Panc1 (cell line): ENCODE measurements at regions of chr3 and their contacts with region 1.

Region 1: GRCh38 chr3:132343018-132343612 is 25.9 kb downstream of the ACP3 start:
- DNase-seq: peak; percentile 43
- ATAC-seq: peak; percentile 79; the same call in 1 of the 2 replicates
- H3K4me3 ChIP-seq: no peak overlapping the region
- H3K27ac ChIP-seq: no peak overlapping the region
- H3K4me1 ChIP-seq: no peaks in the 10 kb centered on the region
- H3K27me3 ChIP-seq: peaks cover 23% of the 10 kb centered on the region
- CTCF ChIP-seq: peak; percentile 83

Region 2: GRCh38 chr3:132034486-132035464 is 308.3 kb before region 1 on chr3 and contains the start of gene CPNE4:
- CTCF ChIA-PET with region 1: no interaction called
- POLR2A ChIA-PET with region 1: no interaction called
- in situ Hi-C with region 1: no loop called
- intact Hi-C with region 1: loop called (anchors 10 kb)
- DNase-seq: peak; percentile 20
- ATAC-seq: peak; percentile 97
- H3K4me3 ChIP-seq: peak within 1 kb of the TSS; percentile 25 to 49
- H3K27ac ChIP-seq: no peak within 1 kb of the TSS
- H3K4me1 ChIP-seq: 0 out of 2 replicates have a peak, but pooled peaks cover 4% of the 10 kb centered on the region
- H3K27me3 ChIP-seq: peaks cover 44% of the 10 kb centered on the region
- CTCF ChIP-seq: peak; percentile 91
- total RNA-seq, gene CPNE4: not detected

Region 3: GRCh38 chr3:132253262-132253878 is 89.7 kb before region 1 on chr3:
- CTCF ChIA-PET with region 1: interaction called, 3 read pairs
- POLR2A ChIA-PET with region 1: no interaction called
- in situ Hi-C with region 1: no loop called
- intact Hi-C with region 1: loop called (anchors 1 kb)
- DNase-seq: peak; percentile 41
- ATAC-seq: peak; percentile 91
- H3K4me3 ChIP-seq: no peak overlapping the region
- H3K27ac ChIP-seq: no peak overlapping the region
- H3K4me1 ChIP-seq: no peaks in the 10 kb centered on the region
- H3K27me3 ChIP-seq: peaks cover 9% of the 10 kb centered on the region; the same call in 1 of the 2 replicates
- CTCF ChIP-seq: peak; percentile 85

Region 4: DNA sequence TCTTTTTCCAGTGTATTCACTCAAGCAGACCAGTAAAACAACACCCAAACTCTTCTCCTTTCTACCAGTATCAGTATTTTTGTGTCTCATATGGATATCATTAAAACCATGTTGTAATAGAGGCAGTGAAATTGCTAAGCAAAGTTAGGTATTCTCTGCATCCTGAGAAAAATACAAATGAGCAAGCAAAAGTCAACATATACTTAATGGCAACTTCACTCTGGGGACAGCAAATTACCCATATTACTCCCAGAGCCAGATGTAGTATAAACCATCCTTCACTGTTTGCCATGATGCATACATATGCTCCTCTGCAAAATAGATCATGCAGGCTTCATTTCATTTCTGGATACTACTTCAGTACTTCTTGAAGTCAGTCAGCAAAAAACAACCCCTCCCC is 339.1 kb after region 1 on chr3:
- CTCF ChIA-PET with region 1: no interaction called
- POLR2A ChIA-PET with region 1: no interaction called
- in situ Hi-C with region 1: no loop called
- intact Hi-C with region 1: no loop called
- DNase-seq: no peak
- ATAC-seq: no peak
- H3K4me3 ChIP-seq: no peak overlapping the region
- H3K27ac ChIP-seq: no peak overlapping the region
- H3K4me1 ChIP-seq: no peaks in the 10 kb centered on the region
- H3K27me3 ChIP-seq: no peaks in the 10 kb centered on the region
- CTCF ChIP-seq: no peak